ACHN (cell line): ENCODE measurements at regions of chr7 and their contacts with region 1.

Region 1: DNA sequence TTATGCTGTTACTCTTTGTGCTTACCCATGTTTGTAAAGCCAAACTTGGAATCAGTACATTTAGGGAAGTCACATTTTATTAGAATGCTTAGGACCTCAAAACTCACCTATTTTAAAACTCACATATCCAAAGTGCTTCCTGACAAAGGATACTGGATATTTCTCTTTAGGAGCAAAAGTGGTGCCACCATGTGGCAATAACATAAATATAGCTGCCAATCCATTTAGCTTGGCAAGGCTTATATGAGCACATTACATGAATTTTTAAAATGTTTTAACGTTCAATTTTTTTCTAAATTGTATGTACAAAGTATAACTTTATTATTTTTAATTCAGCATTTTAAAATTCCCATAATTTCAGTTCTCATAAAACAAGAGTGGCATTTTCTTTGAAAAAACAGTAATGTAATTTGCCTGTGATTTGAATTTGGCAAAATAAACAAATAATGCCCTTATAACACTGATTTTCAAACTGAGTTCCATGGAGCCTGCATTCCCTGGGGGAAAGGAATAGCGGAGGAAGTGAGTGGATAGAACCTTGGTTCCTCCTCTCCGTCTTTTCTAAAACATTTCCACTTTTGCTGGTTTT is 75.4 kb downstream of the HDAC9 start:
- DNase-seq: peak; percentile 79

Region 2: GRCh38 chr7:18352339-18353255 is 218.4 kb before region 1 on chr7:
- in situ Hi-C with region 1: loop called (anchors 25 kb)
- DNase-seq: peak; percentile 80